Activated CD4-positive, alpha-beta memory T cell treated with anti-CD3 and anti-CD28 coated beads for 36 hours (primary cell): ENCODE measurements at regions of chr2 and their contacts with region 1.

Region 1: DNA sequence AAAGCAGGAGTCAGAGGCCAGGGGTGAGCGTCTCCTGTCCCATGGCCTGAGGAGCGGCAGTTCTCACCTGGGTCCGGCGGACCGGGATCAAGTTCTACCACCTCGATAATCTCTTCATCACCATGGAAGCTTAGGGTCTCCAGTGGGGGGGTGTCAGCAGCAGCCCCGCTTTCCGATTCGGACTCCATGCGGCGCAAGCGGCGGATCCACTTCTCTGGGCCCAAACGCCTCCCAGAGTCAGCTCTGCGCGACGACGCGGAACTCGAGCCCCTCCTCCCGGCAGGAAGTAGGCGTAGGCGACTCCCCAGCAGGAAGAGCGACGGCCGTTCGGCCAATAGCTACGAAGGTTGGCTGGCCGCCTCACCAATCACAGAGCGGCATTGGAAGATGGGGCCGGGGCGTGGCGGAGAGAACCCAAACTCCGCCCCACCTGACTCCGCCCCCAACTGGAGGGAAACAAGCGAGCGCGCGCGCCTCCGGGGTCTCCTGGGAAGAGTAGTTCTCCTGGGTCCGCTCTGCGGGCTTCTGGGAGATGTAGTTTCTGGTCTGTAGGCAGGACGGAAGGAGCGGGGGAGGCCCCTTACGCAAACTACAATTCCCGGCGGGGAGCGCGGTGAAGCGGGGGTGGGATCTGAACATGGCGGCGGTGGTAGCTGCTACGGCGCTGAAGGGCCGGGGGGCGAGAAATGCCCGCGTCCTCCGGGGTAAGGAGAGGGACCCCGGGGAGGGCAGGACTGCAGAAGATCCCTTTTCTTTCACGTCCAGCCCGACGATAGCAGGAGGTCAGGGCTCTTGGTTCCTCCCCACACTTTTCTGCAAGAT is at the starts of genes AAMP and PNKD:
- DNase-seq: peak; percentile 100
- H3K4me3 Mint-ChIP-seq: peak within 1 kb of the TSS; percentile 84
- H3K27ac Mint-ChIP-seq: peak within 1 kb of the TSS; percentile 82
- H3K4me1 Mint-ChIP-seq: peaks cover 29% of the 10 kb centered on the region
- H3K27me3 Mint-ChIP-seq: no peaks in the 10 kb centered on the region
- total RNA-seq, gene AAMP: 60.8 to 65.6 TPM
- total RNA-seq, gene PNKD: 18.4 to 19.4 TPM

Region 2: DNA sequence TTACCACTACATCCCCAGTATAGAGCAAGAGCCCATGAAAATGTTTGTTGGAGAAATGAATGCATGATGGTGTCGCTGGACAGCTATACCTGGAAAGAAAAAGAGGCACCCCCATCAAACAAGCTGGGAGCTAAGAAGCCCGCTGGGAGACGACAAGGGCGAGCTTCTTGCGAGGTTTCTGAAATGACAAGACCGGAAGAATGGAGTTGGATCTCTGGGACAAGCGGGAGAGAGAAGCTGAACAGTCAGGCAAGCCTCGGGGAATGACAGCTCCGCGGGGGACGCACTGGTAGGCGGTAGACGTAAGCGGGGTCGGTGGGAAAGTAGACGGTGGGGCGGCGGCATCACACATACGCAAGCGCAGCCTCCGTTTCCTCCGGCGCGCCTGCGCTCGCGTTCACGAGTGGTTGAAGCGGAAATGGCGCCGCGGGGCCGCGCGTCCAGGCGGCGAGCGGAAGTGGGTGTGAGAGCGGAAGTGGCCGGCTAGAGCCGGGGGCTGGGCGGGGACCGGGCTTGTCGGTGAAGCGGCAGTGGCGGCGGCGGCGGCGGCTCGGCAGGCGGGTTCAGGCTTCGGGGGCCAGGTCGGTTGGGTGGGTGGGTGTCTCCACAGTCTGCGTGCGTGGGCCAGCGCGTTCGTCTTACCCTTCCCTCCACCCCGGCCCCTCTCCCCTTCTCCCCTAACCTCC is 53.3 kb before region 1 on chr2 and contains the start of gene ARPC2:
- CTCF ChIA-PET with region 1: interaction called, 9 read pairs
- POLR2A ChIA-PET with region 1: interaction called, 12 read pairs
- intact Hi-C with region 1: loop called (anchors 1 kb)
- DNase-seq: peak; percentile 97
- H3K4me3 Mint-ChIP-seq: peak within 1 kb of the TSS; percentile 83
- H3K27ac Mint-ChIP-seq: peak within 1 kb of the TSS; percentile 91
- H3K4me1 Mint-ChIP-seq: peaks cover 34% of the 10 kb centered on the region
- H3K27me3 Mint-ChIP-seq: no peaks in the 10 kb centered on the region
- total RNA-seq, gene ARPC2: 564 to 570 TPM

Region 3: GRCh38 chr2:218286570-218287459 is 16.7 kb after region 1 on chr2:
- CTCF ChIA-PET with region 1: interaction called, 197 read pairs
- POLR2A ChIA-PET with region 1: interaction called, 115 read pairs
- intact Hi-C with region 1: loop called (anchors 1 kb)
- DNase-seq: peak; percentile 92
- H3K4me3 Mint-ChIP-seq: peak overlapping the region; percentile 82
- H3K27ac Mint-ChIP-seq: peak overlapping the region; percentile 98
- H3K4me1 Mint-ChIP-seq: peaks cover 81% of the 10 kb centered on the region
- H3K27me3 Mint-ChIP-seq: no peaks in the 10 kb centered on the region

Region 4: DNA sequence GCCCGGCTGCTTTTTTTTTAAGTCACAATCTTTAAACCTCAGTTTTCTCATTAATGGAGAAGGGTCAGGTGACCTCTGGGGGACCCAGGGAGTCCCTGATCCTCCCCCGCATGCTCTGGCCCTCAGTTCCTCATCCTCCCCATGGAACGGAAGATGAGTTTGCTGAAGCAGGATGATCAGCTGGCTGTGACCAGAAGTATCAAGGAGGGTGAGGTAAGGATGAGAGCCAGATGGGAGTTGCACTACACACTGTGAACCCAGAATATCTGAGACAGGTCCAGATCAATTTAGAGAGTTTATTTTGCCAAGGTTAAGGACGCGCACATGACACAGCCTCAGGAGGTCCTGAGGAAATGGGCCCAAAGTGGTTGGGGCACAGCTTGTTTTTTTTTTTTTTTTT is 90.3 kb after region 1 on chr2:
- CTCF ChIA-PET with region 1: interaction called, 60 read pairs
- POLR2A ChIA-PET with region 1: no interaction called
- intact Hi-C with region 1: loop called (anchors 1 kb)
- DNase-seq: no peak
- H3K4me3 Mint-ChIP-seq: no peak overlapping the region
- H3K27ac Mint-ChIP-seq: no peak overlapping the region
- H3K4me1 Mint-ChIP-seq: no peaks in the 10 kb centered on the region
- H3K27me3 Mint-ChIP-seq: no peaks in the 10 kb centered on the region

Region 5: GRCh38 chr2:218648088-218648786 is 378.1 kb after region 1 on chr2:
- CTCF ChIA-PET with region 1: no interaction called
- POLR2A ChIA-PET with region 1: no interaction called
- intact Hi-C with region 1: loop called (anchors 2 kb)
- DNase-seq: peak; percentile 66
- H3K4me3 Mint-ChIP-seq: no peak overlapping the region
- H3K27ac Mint-ChIP-seq: no peak overlapping the region
- H3K4me1 Mint-ChIP-seq: peaks cover 9% of the 10 kb centered on the region
- H3K27me3 Mint-ChIP-seq: no peaks in the 10 kb centered on the region

Region 6: GRCh38 chr2:219278655-219279516 is 1008.8 kb after region 1 on chr2 and contains the start of gene DNAJB2:
- CTCF ChIA-PET with region 1: no interaction called
- POLR2A ChIA-PET with region 1: no interaction called
- intact Hi-C with region 1: loop called (anchors 2 kb)
- DNase-seq: peak; percentile 100
- H3K4me3 Mint-ChIP-seq: peak within 1 kb of the TSS; percentile 80
- H3K27ac Mint-ChIP-seq: peak within 1 kb of the TSS; percentile 95
- H3K4me1 Mint-ChIP-seq: peaks cover 43% of the 10 kb centered on the region
- H3K27me3 Mint-ChIP-seq: no peaks in the 10 kb centered on the region
- total RNA-seq, gene DNAJB2: 37.3 to 39.1 TPM